Activated CD4-positive, alpha-beta T cell treated with anti-CD3 and anti-CD28 coated beads, Interleukin-2, amount 10 ng/mL, durations not matched to agents 24 days and 14 days (primary cell): ENCODE measurements at regions of chr7 and their contacts with region 1.

Region 1: DNA sequence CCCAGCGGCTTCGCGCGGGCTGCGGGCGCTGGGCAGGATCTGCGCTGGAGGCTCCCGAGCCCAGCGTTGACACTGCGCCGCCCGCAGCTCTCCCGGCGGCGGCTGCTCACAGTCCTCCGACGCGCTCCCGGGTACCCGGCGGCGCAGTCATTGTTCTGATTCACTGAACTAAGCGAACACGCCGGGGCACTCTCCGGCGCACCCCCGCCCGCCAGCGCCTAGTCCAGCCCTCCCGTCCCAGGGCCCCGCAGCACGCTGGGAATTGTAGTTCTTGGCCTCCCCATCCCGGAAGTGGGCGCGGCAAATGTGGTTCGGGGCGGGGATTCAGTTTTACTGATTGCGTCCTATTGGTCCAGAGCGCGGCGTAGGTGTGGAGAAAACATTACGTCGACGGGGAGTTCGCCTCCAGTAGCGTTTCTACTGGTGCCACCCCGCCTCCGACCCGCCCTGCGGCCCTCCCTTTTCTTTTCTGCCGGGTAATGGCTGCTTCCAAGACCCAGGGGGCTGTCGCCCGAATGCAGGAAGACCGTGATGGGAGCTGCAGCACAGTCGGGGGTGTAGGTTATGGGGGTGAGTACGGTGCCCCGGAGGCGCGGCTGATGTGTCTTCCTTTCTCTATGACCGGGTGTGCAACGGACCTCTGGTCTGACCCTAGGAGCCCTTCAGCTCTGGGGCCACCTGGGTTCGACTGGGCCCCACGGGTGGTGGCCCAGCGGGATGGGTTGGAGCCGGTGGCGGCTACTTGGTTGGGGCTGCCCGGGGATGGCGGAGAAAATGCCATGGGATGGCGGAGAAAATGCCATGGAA is at the starts of genes DOCK4 and ZNF277:
- DNase-seq: peak; percentile 100
- H3K4me3 Mint-ChIP-seq: peak within 1 kb of the TSS; percentile 91
- H3K27ac Mint-ChIP-seq: peak within 1 kb of the TSS; percentile 83
- H3K4me1 Mint-ChIP-seq: peaks cover 30% of the 10 kb centered on the region
- H3K27me3 Mint-ChIP-seq: peaks cover 36% of the 10 kb centered on the region
- total RNA-seq, gene DOCK4: 0.33 and 0.89 TPM in 2 replicates
- total RNA-seq, gene ZNF277: 10.1 and 13.7 TPM in 2 replicates

Region 2: GRCh38 chr7:112056409-112056808 is 150.0 kb before region 1 on chr7:
- intact Hi-C with region 1: no loop called
- DNase-seq: no peak
- H3K4me3 Mint-ChIP-seq: no peak overlapping the region
- H3K27ac Mint-ChIP-seq: no peak overlapping the region
- H3K4me1 Mint-ChIP-seq: peaks cover 2% of the 10 kb centered on the region
- H3K27me3 Mint-ChIP-seq: no peaks in the 10 kb centered on the region

Region 3: DNA sequence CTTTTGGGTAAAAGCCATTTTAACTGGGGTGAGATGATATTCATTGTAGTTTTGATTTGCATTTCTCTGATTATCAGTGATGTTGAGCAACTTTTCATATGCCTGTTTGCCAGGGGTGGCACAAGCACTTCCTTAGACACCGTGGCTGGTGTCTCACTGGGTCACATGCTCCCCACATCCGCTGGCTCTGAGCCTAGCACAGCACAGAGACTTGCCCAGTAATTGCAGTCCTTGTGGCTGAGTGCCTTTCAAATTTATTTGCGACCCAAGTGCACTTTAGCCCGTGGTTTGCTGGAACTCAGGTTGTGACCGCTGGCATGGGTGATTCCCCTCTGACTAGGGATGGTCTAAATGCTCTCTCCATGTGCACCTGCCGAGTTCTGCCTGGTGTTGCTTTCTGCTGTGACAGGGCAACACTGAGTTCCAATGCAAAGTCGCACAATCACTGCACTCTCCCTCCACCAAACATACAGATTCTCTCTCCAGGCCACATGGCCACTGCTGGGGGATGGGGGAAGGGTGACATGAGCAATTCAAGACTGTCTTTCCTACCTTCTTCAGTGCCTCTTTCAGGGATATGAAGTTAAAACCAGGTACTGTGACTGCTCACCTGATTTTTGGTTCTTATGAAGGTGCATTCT is 66.6 kb after region 1 on chr7:
- intact Hi-C with region 1: no loop called
- DNase-seq: no peak
- H3K4me3 Mint-ChIP-seq: no peak overlapping the region
- H3K27ac Mint-ChIP-seq: no peak overlapping the region
- H3K4me1 Mint-ChIP-seq: peaks cover 4% of the 10 kb centered on the region
- H3K27me3 Mint-ChIP-seq: no peaks in the 10 kb centered on the region

Region 4: DNA sequence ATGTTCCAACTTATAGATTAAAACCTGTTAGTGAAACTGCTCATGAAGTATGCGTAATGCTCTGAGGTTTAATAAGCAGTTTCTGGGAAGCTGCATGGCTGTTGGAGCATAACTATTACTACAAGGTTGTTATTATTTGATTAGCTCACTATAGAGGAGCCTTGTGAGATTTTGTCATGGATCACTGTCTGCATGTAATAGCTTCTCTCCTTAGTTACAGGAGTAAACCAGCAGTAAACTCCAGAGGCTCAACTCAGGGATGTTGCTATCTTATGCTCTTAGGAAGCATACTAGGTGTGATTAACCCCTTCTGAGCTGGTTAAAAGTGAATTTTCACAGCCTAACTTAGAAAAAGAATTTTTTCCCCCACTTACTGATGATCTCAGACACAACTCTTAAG is 180.2 kb after region 1 on chr7:
- intact Hi-C with region 1: loop called (anchors 2 kb)
- DNase-seq: no peak
- H3K4me3 Mint-ChIP-seq: no peak overlapping the region
- H3K27ac Mint-ChIP-seq: no peak overlapping the region
- H3K4me1 Mint-ChIP-seq: peaks cover 3% of the 10 kb centered on the region
- H3K27me3 Mint-ChIP-seq: peaks cover 25% of the 10 kb centered on the region

Region 5: GRCh38 chr7:112510001-112510742 is 303.7 kb after region 1 on chr7:
- intact Hi-C with region 1: loop called (anchors 1 kb)
- DNase-seq: peak; percentile 59
- H3K4me3 Mint-ChIP-seq: peak overlapping the region; percentile 49
- H3K27ac Mint-ChIP-seq: peak overlapping the region; percentile 87
- H3K4me1 Mint-ChIP-seq: peaks cover 20% of the 10 kb centered on the region
- H3K27me3 Mint-ChIP-seq: peaks cover 4% of the 10 kb centered on the region

Region 6: GRCh38 chr7:112939574-112940314 is 733.3 kb after region 1 on chr7:
- intact Hi-C with region 1: loop called (anchors 1 kb)
- DNase-seq: peak; percentile 100
- H3K4me3 Mint-ChIP-seq: peak overlapping the region; percentile 95
- H3K27ac Mint-ChIP-seq: peak overlapping the region; percentile 97
- H3K4me1 Mint-ChIP-seq: peaks cover 26% of the 10 kb centered on the region
- H3K27me3 Mint-ChIP-seq: peaks cover 5% of the 10 kb centered on the region